ENCODE measurements at regions of chr13 and their contacts with region 1.

Region 1: GRCh38 chr13:69737129-69737935 is 370.3 kb upstream of the ATXN8OS start:
- DNase-seq: no peak
- H3K4me3 Mint-ChIP-seq: no peak overlapping the region
- H3K27ac Mint-ChIP-seq: no peak overlapping the region
- H3K4me1 Mint-ChIP-seq: no peaks in the 10 kb centered on the region
- H3K27me3 Mint-ChIP-seq: peaks cover 73% of the 10 kb centered on the region
- CTCF ChIP-seq: no peak

Region 2: DNA sequence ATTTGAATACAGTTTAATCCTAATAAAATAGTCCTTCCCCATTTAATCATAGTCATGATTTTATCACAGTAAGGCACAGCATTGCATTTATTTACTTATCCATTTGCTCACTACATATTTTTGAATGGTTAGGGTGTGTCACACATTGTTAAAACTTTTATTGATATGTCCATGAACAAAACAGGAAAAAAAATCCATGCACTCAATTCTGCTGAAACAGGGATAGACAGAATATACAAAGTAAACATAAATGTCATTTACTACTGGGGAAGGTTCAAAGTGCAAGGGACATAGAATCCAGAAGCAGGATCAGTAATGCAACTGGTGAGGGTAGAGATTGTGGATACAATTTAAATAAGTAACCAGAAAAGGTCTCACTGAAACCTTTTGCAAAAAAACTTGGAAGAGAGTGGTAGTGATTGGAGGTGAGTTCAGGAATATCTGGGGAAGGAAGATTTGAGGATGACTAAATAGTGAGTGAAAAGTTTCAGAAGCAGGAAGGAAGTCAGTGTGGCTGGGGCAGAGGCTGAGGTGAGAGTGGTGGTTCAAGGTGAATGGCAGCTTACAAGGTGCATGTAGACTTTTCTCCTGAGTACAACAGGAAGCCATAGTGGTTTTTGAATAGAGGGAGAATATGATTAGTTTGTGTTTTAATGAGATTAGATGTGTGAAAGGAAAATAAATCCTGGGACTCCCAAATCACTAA is 16.9 kb before region 1 on chr13:
- CTCF ChIA-PET with region 1: no interaction called
- POLR2A ChIA-PET with region 1: no interaction called
- intact Hi-C with region 1: no loop called
- DNase-seq: no peak
- H3K4me3 Mint-ChIP-seq: no peak overlapping the region
- H3K27ac Mint-ChIP-seq: no peak overlapping the region
- H3K4me1 Mint-ChIP-seq: no peaks in the 10 kb centered on the region
- H3K27me3 Mint-ChIP-seq: peaks cover 55% of the 10 kb centered on the region
- CTCF ChIP-seq: no peak

Region 3: DNA sequence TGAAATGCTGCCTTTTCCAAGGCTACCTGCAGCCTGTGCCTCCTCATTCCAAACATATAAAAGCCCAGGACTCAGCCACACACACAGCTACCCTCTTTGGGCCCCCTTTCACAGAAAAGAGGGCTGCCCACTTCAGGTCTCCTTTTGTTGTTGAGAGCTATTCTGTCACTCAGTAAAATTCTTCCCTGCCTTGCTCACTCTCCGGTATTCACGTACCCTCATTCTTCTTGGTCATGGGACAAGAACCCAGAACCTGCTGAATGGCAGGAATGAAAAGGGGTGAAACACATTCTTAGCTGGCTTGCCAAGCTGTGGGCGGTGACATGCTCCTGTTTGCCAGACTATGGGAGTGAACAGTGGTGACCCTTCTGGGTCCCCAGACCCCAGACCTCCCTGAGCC is 32.3 kb after region 1 on chr13:
- CTCF ChIA-PET with region 1: no interaction called
- POLR2A ChIA-PET with region 1: no interaction called
- intact Hi-C with region 1: no loop called
- DNase-seq: no peak
- H3K4me3 Mint-ChIP-seq: no peak overlapping the region
- H3K27ac Mint-ChIP-seq: no peak overlapping the region
- H3K4me1 Mint-ChIP-seq: no peaks in the 10 kb centered on the region
- H3K27me3 Mint-ChIP-seq: peaks cover 22% of the 10 kb centered on the region
- CTCF ChIP-seq: no peak

Region 4: DNA sequence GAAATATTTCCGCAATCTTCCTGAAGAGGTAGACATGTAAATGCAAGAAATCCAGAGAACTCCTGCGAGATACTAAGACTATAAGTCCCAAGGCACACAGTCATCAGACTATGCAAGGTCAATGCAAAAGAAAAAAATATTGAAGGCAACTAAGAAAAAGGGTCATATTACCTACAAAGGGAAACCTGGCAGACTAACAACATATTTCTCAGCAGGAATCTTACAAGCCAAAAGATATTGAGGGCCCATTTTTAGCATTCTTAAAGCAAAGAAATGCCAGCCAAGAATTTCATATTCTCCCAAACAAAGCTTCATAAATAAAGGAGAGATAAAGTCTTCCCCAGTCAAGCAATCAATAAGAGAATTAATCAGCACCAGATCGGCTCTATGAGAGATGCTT is 71.8 kb after region 1 on chr13:
- CTCF ChIA-PET with region 1: no interaction called
- POLR2A ChIA-PET with region 1: no interaction called
- intact Hi-C with region 1: loop called (anchors 10 kb)
- DNase-seq: no peak
- H3K4me3 Mint-ChIP-seq: no peak overlapping the region
- H3K27ac Mint-ChIP-seq: no peak overlapping the region
- H3K4me1 Mint-ChIP-seq: no peaks in the 10 kb centered on the region
- H3K27me3 Mint-ChIP-seq: peaks cover 49% of the 10 kb centered on the region
- CTCF ChIP-seq: no peak

Region 5: GRCh38 chr13:70171151-70171550 is 433.8 kb after region 1 on chr13:
- CTCF ChIA-PET with region 1: no interaction called
- POLR2A ChIA-PET with region 1: no interaction called
- intact Hi-C with region 1: no loop called
- DNase-seq: no peak
- H3K4me3 Mint-ChIP-seq: no peak overlapping the region
- H3K27ac Mint-ChIP-seq: no peak overlapping the region
- H3K4me1 Mint-ChIP-seq: no peaks in the 10 kb centered on the region
- H3K27me3 Mint-ChIP-seq: peaks cover 30% of the 10 kb centered on the region
- CTCF ChIP-seq: no peak

Measured in MCF 10A (cell line).